ENCODE measurements at regions of chr9 and their contacts with region 1.

Region 1: GRCh38 chr9:110452227-110452801 is 114.7 kb upstream of the TXNDC8 start:
- DNase-seq: peak; percentile 43
- H3K4me3 Mint-ChIP-seq: no peak overlapping the region
- H3K27ac Mint-ChIP-seq: no peak overlapping the region
- H3K4me1 Mint-ChIP-seq: no peaks in the 10 kb centered on the region
- H3K27me3 Mint-ChIP-seq: no peaks in the 10 kb centered on the region
- CTCF ChIP-seq: peak; percentile 47

Region 2: DNA sequence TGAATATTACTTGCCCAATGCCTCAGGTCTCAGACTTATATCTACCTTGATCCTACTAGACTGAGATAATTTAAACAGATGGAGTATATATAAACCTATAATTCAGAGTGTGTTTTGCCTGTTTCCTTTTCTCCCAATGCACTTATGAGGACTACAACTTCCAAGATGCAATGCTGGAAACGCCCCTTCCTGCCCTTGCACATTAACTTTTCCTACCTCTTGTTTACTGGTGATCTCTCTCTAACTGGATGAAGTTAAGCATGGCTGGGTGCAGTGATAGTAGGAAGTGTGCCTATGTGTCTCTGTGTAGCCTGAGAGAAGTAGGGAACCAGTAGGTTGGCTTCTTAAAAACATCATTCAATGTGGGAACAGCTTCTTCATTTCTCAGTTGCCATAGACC is 12.0 kb after region 1 on chr9:
- CTCF ChIA-PET with region 1: interaction called, 14 read pairs
- POLR2A ChIA-PET with region 1: interaction called, 3 read pairs
- intact Hi-C with region 1: no loop called
- DNase-seq: no peak
- H3K4me3 Mint-ChIP-seq: no peak overlapping the region
- H3K27ac Mint-ChIP-seq: no peak overlapping the region
- H3K4me1 Mint-ChIP-seq: no peaks in the 10 kb centered on the region
- H3K27me3 Mint-ChIP-seq: no peaks in the 10 kb centered on the region
- CTCF ChIP-seq: no peak

Region 3: GRCh38 chr9:110579034-110579861 is 126.9 kb after region 1 on chr9 and contains the start of gene SVEP1:
- CTCF ChIA-PET with region 1: interaction called, 7 read pairs
- POLR2A ChIA-PET with region 1: interaction called, 3 read pairs
- intact Hi-C with region 1: loop called (anchors 1 kb)
- DNase-seq: peak; percentile 67
- H3K4me3 Mint-ChIP-seq: peak within 1 kb of the TSS; percentile 98
- H3K27ac Mint-ChIP-seq: peak within 1 kb of the TSS; percentile 37
- H3K4me1 Mint-ChIP-seq: peaks cover 43% of the 10 kb centered on the region
- H3K27me3 Mint-ChIP-seq: no peaks in the 10 kb centered on the region
- CTCF ChIP-seq: no peak
- total RNA-seq, gene SVEP1: 9.9 and 21.9 TPM in 2 replicates

Measured in MCF 10A (cell line).